PC-9 (cell line): ENCODE measurements at regions of chr6 and their contacts with region 1.

Region 1: DNA sequence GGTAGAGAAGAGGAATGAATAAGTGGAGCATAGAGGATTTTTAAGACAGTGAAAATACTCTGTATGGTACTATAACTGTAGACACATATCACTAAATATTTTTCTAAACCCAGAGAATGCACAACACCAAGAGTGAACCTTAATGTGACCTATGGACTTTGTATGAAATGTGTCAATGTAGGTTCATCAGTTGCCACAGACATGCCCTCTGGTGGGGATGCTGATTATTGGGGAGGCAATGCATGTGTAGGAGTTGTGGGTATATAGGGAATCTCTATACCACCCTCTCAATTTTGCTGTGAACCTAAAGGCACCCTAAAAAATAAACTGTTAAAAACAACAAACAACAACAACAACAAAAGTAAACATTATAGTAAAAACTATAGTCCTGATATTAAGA is 293.7 kb downstream of the RNF144B start:
- DNase-seq: no peak
- H3K4me3 ChIP-seq: no peak overlapping the region
- H3K27ac ChIP-seq: no peak overlapping the region
- H3K4me1 ChIP-seq: no peaks in the 10 kb centered on the region
- H3K27me3 ChIP-seq: no peaks in the 10 kb centered on the region
- CTCF ChIP-seq: no peak

Region 2: GRCh38 chr6:18601516-18602020 is 79.3 kb before region 1 on chr6:
- CTCF ChIA-PET with region 1: no interaction called
- POLR2A ChIA-PET with region 1: no interaction called
- intact Hi-C with region 1: no loop called
- DNase-seq: no peak
- H3K4me3 ChIP-seq: no peak overlapping the region
- H3K27ac ChIP-seq: no peak overlapping the region
- H3K4me1 ChIP-seq: no peaks in the 10 kb centered on the region
- H3K27me3 ChIP-seq: 0 out of 2 replicates have a peak, but pooled peaks cover 4% of the 10 kb centered on the region
- CTCF ChIP-seq: no peak

Region 3: GRCh38 chr6:19999319-20000191 is 1318.7 kb after region 1 on chr6:
- CTCF ChIA-PET with region 1: no interaction called
- POLR2A ChIA-PET with region 1: no interaction called
- intact Hi-C with region 1: loop called (anchors 10 kb)
- DNase-seq: peak in 1 of 2 experiments; percentile 37
- H3K4me3 ChIP-seq: no peak overlapping the region
- H3K27ac ChIP-seq: no peak overlapping the region
- H3K4me1 ChIP-seq: no peaks in the 10 kb centered on the region
- H3K27me3 ChIP-seq: no peaks in the 10 kb centered on the region
- CTCF ChIP-seq: no peak